ENCODE measurements at regions of chr1 and their contacts with region 1.

Region 1: GRCh38 chr1:185170291-185170848 is 13.4 kb downstream of the SWT1 start:
- DNase-seq: peak; percentile 64
- ATAC-seq: peak; percentile 99
- H3K4me3 ChIP-seq: peak overlapping the region in 1 of 3 experiments; percentile 45; a peak in 1 of 6 replicates
- H3K27ac ChIP-seq: no peak overlapping the region
- H3K4me1 ChIP-seq: peaks cover 10% of the 10 kb centered on the region
- H3K27me3 ChIP-seq: no peaks in the 10 kb centered on the region
- CTCF ChIP-seq: peak; percentile 84
- EP300 ChIP-seq: no peak
- POLR2A ChIP-seq: no peak
- RAD21 ChIP-seq: peak; percentile 76

Region 2: DNA sequence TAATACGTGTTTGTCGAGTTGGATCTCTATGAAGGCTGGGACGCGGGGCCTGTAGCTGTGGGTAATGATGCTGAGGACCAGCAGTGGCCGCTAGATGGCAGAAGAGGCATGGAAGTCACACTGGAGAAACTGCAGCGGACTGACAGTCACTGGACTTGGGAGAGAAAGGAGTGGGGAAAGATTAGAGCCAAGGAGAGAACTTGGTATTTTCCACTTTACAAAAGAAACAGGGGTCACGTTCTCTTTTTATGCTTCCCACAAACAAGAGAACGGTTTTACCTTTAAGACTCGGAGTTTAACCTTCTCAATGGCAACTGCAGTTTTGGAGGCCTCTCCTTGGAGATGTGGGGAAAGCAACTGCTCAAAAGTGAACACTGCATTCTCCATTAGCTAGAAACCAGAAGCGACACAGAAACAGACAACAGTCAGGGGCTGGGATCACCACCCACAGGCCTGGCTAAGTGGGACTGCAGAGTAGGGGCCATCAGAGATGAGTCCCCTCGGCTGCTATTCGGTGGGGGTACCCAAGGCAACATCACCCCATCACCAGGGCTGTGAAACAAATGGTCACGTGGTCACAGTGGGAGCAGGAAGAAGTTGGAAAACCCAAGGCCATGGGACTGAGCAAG is 364.6 kb before region 1 on chr1:
- CTCF ChIA-PET with region 1: interaction called, 35 read pairs
- POLR2A ChIA-PET with region 1: no interaction called
- in situ Hi-C with region 1: loop called (anchors 5 kb)
- intact Hi-C with region 1: loop called (anchors 1 kb)
- DNase-seq: peak; percentile 65
- ATAC-seq: peak; percentile 100
- H3K4me3 ChIP-seq: no peak overlapping the region
- H3K27ac ChIP-seq: no peak overlapping the region
- H3K4me1 ChIP-seq: peaks cover 9% of the 10 kb centered on the region
- H3K27me3 ChIP-seq: 0 out of 5 replicates have a peak, but pooled peaks cover 0 to 3% of the 10 kb centered on the region in 2 experiments
- CTCF ChIP-seq: peak; percentile 95
- EP300 ChIP-seq: no peak
- POLR2A ChIP-seq: no peak
- RAD21 ChIP-seq: peak; percentile 86

Region 3: GRCh38 chr1:184982002-184982954 is 188.1 kb before region 1 on chr1:
- CTCF ChIA-PET with region 1: interaction called, 3 read pairs
- POLR2A ChIA-PET with region 1: no interaction called
- in situ Hi-C with region 1: no loop called
- intact Hi-C with region 1: loop called (anchors 1 kb)
- DNase-seq: peak; percentile 42
- ATAC-seq: peak; percentile 98
- H3K4me3 ChIP-seq: no peak overlapping the region
- H3K27ac ChIP-seq: no peak overlapping the region
- H3K4me1 ChIP-seq: no peaks in the 10 kb centered on the region
- H3K27me3 ChIP-seq: no peaks in the 10 kb centered on the region
- CTCF ChIP-seq: peak; percentile 82
- EP300 ChIP-seq: no peak
- POLR2A ChIP-seq: no peak
- RAD21 ChIP-seq: peak; percentile 59

Region 4: GRCh38 chr1:185044981-185045813 is 125.2 kb before region 1 on chr1 and contains the start of gene RNF2:
- CTCF ChIA-PET with region 1: no interaction called
- POLR2A ChIA-PET with region 1: no interaction called
- in situ Hi-C with region 1: no loop called
- intact Hi-C with region 1: loop called (anchors 5 kb)
- DNase-seq: peak; percentile 65
- ATAC-seq: peak; percentile 92
- H3K4me3 ChIP-seq: peak within 1 kb of the TSS; percentile 66 to 84 (median 83)
- H3K27ac ChIP-seq: peak within 1 kb of the TSS; percentile 88
- H3K4me1 ChIP-seq: peaks cover 56% of the 10 kb centered on the region
- H3K27me3 ChIP-seq: no peaks in the 10 kb centered on the region
- CTCF ChIP-seq: no peak; the same call in 1 of the 2 replicates
- EP300 ChIP-seq: no peak
- POLR2A ChIP-seq: peak in 1 of 2 experiments; percentile 56; a peak in 2 of 4 replicates
- RAD21 ChIP-seq: peak; percentile 23; the same call in 1 of the 2 replicates
- total RNA-seq, gene RNF2: 21.7 and 32.9 TPM in 2 replicates

Region 5: GRCh38 chr1:185156854-185157598 is 13.3 kb before region 1 on chr1 and contains the starts of genes SWT1 and TRMT1L:
- CTCF ChIA-PET with region 1: interaction called, 4 read pairs
- POLR2A ChIA-PET with region 1: interaction called, 13 read pairs
- in situ Hi-C with region 1: no loop called
- intact Hi-C with region 1: loop called (anchors 2 kb)
- DNase-seq: peak; percentile 98
- ATAC-seq: peak; percentile 96
- H3K4me3 ChIP-seq: peak within 1 kb of the TSS; percentile 92 to 94 (median 93)
- H3K27ac ChIP-seq: peak within 1 kb of the TSS; percentile 91
- H3K4me1 ChIP-seq: peaks cover 26% of the 10 kb centered on the region
- H3K27me3 ChIP-seq: no peaks in the 10 kb centered on the region; a peak in 1 of 5 replicates
- CTCF ChIP-seq: no peak
- EP300 ChIP-seq: no peak
- POLR2A ChIP-seq: peak; percentile 88 to 95
- RAD21 ChIP-seq: no peak
- total RNA-seq, gene SWT1: 2.5 and 4.8 TPM in 2 replicates
- total RNA-seq, gene TRMT1L: 17.9 and 25.4 TPM in 2 replicates

Region 6: GRCh38 chr1:185681034-185681633 is 510.8 kb after region 1 on chr1:
- CTCF ChIA-PET with region 1: no interaction called
- POLR2A ChIA-PET with region 1: no interaction called
- in situ Hi-C with region 1: no loop called
- intact Hi-C with region 1: loop called (anchors 5 kb)
- DNase-seq: peak; percentile 50
- ATAC-seq: peak; percentile 84
- H3K4me3 ChIP-seq: no peak overlapping the region
- H3K27ac ChIP-seq: no peak overlapping the region
- H3K4me1 ChIP-seq: peaks cover 9% of the 10 kb centered on the region
- H3K27me3 ChIP-seq: peaks cover 0 to 12% of the 10 kb centered on the region in 2 experiments; a peak in 1 of 5 replicates
- CTCF ChIP-seq: peak; percentile 77
- EP300 ChIP-seq: no peak
- POLR2A ChIP-seq: no peak
- RAD21 ChIP-seq: peak; percentile 65; the same call in 1 of the 2 replicates